ENCODE measurements at regions of chr12 and their contacts with region 1.

Region 1: GRCh38 chr12:127677537-127678131 is 589.3 kb upstream of the TMEM132C start:
- DNase-seq: peak; percentile 70
- ATAC-seq: peak; percentile 90
- H3K4me3 ChIP-seq: no peak overlapping the region
- H3K27ac ChIP-seq: no peak overlapping the region
- H3K4me1 ChIP-seq: no peaks in the 10 kb centered on the region
- H3K27me3 ChIP-seq: no peaks in the 10 kb centered on the region
- CTCF ChIP-seq: peak; percentile 65
- POLR2A ChIP-seq: no peak
- RAD21 ChIP-seq: peak; percentile 79

Region 2: DNA sequence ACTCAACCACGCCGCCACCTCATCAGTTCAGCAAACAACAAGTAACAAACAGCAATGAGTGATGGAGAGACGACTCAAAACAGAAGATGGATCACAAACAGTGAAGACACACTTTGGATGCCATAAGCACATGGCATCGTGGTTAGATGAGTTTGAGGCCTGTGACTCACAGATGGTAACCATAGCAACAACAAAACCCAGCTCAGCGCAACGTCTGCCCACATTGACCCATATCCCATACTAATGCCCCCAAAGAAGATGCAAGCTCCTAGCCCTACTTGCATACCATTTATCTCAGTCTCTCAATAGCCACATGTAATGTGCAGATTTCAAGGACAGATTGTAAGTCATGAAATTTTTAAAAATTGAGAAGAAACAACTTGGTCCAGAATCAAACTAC is 733.0 kb before region 1 on chr12:
- CTCF ChIA-PET with region 1: no interaction called
- POLR2A ChIA-PET with region 1: no interaction called
- dilution Hi-C with region 1: no loop called
- in situ Hi-C with region 1: no loop called
- intact Hi-C with region 1: loop called (anchors 5 kb)
- DNase-seq: no peak
- ATAC-seq: no peak
- H3K4me3 ChIP-seq: no peak overlapping the region
- H3K27ac ChIP-seq: no peak overlapping the region
- H3K4me1 ChIP-seq: no peaks in the 10 kb centered on the region
- H3K27me3 ChIP-seq: no peaks in the 10 kb centered on the region
- CTCF ChIP-seq: no peak
- POLR2A ChIP-seq: no peak
- RAD21 ChIP-seq: no peak

Region 3: GRCh38 chr12:127070515-127071157 is 607.0 kb before region 1 on chr12:
- CTCF ChIA-PET with region 1: no interaction called
- POLR2A ChIA-PET with region 1: no interaction called
- dilution Hi-C with region 1: no loop called
- in situ Hi-C with region 1: no loop called
- intact Hi-C with region 1: no loop called
- DNase-seq: no peak
- ATAC-seq: no peak
- H3K4me3 ChIP-seq: no peak overlapping the region
- H3K27ac ChIP-seq: no peak overlapping the region
- H3K4me1 ChIP-seq: no peaks in the 10 kb centered on the region
- H3K27me3 ChIP-seq: no peaks in the 10 kb centered on the region
- CTCF ChIP-seq: no peak
- POLR2A ChIP-seq: no peak
- RAD21 ChIP-seq: no peak

Region 4: GRCh38 chr12:127108360-127109215 is 569.0 kb before region 1 on chr12:
- CTCF ChIA-PET with region 1: interaction called, 10 read pairs
- POLR2A ChIA-PET with region 1: no interaction called
- dilution Hi-C with region 1: no loop called
- in situ Hi-C with region 1: no loop called
- intact Hi-C with region 1: no loop called
- DNase-seq: peak; percentile 42
- ATAC-seq: no peak
- H3K4me3 ChIP-seq: no peak overlapping the region
- H3K27ac ChIP-seq: no peak overlapping the region
- H3K4me1 ChIP-seq: no peaks in the 10 kb centered on the region
- H3K27me3 ChIP-seq: no peaks in the 10 kb centered on the region
- CTCF ChIP-seq: peak; percentile 51
- POLR2A ChIP-seq: no peak
- RAD21 ChIP-seq: peak; percentile 61

Region 5: GRCh38 chr12:127485528-127485927 is 192.1 kb before region 1 on chr12:
- CTCF ChIA-PET with region 1: interaction called, 16 read pairs
- POLR2A ChIA-PET with region 1: no interaction called
- dilution Hi-C with region 1: no loop called
- in situ Hi-C with region 1: loop called (anchors 10 kb)
- intact Hi-C with region 1: no loop called
- DNase-seq: peak; percentile 86
- ATAC-seq: peak; percentile 76
- H3K4me3 ChIP-seq: no peak overlapping the region
- H3K27ac ChIP-seq: no peak overlapping the region
- H3K4me1 ChIP-seq: peaks cover 2% of the 10 kb centered on the region; the same call in 1 of the 2 replicates
- H3K27me3 ChIP-seq: no peaks in the 10 kb centered on the region
- CTCF ChIP-seq: peak; percentile 61
- POLR2A ChIP-seq: no peak
- RAD21 ChIP-seq: peak; percentile 73

Region 6: DNA sequence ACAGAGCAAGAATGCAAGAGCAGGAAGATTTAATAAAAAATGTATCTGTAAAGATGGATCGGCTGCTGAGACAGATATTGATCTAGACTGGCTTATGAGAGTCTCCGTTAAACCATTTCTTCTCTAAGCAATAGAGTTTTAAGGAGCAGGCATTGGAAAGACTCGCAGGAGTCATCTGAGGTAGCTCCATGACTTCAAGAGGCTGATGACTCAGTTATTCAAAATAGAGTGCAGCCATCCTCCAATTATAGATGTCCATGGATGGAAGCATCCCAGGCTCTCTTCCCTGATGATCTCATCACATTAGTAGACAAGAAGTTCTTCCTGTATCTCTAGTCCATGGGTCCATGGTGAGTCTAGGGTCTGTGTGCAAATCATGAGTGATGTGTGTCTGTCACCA is 49.0 kb before region 1 on chr12:
- CTCF ChIA-PET with region 1: no interaction called
- POLR2A ChIA-PET with region 1: no interaction called
- dilution Hi-C with region 1: no loop called
- in situ Hi-C with region 1: no loop called
- intact Hi-C with region 1: no loop called
- DNase-seq: peak; percentile 75
- ATAC-seq: peak; percentile 32; the same call in 1 of the 2 replicates
- H3K4me3 ChIP-seq: no peak overlapping the region
- H3K27ac ChIP-seq: no peak overlapping the region
- H3K4me1 ChIP-seq: peaks cover 3% of the 10 kb centered on the region; the same call in 1 of the 2 replicates
- H3K27me3 ChIP-seq: no peaks in the 10 kb centered on the region
- CTCF ChIP-seq: no peak
- POLR2A ChIP-seq: no peak
- RAD21 ChIP-seq: no peak